Activated B cell treated with CpG ODN at 0.5 μM for 24 hours (primary cell): ENCODE measurements at regions of chr11 and their contacts with region 1.

Region 1: GRCh38 chr11:61071208-61071681 is 31.0 kb upstream of the CD5 start:
- DNase-seq: no peak
- ATAC-seq: peak; percentile 59
- H3K4me3 Mint-ChIP-seq: peak overlapping the region; percentile 70
- H3K27ac Mint-ChIP-seq: peak overlapping the region; percentile 95
- H3K4me1 Mint-ChIP-seq: peaks cover 81% of the 10 kb centered on the region
- H3K27me3 Mint-ChIP-seq: no peaks in the 10 kb centered on the region
- CTCF ChIP-seq: no peak

Region 2: DNA sequence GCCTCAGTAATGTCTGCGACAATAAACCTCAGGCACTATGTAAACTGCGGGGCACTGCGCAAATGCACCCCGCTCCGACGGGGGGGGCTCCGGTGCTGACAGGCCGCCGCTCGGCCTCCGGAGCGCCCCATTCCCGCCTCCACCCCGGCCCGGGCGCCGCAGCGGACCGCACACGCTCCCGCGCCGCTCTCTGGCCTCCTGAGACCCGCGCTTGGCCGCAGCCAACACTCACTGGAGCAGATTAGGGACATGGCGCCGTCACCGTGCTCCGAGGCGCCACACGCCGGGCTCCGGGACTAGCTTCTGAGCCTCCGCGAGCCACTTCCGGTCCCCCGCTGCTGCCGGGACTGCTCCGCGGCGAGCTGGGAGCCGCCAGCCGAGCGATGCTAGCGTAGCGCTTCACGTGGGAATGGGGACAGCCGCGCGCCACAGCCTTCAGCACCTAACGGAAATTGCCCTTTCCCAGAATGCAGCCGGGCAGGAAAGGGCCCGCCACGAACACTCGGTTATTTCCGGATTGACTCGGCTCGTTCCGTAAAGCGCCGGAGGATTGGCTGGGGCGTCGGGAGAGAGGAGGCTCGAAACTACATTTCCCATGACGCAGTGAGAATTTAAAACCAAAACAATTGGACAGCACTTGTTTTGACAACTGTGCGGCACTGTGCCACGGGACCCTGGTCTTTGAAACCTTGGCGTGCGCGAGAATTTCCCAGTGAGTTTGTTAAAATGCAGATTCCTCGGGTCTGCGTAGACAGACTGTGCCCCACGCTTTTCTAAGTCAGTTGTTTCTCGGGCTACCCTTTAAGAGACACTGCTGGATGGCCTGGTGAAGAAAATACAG is 164.9 kb before region 1 on chr11 and contains the start of gene PRPF19:
- CTCF ChIA-PET with region 1: no interaction called
- POLR2A ChIA-PET with region 1: interaction called, 5 read pairs
- intact Hi-C with region 1: loop called (anchors 2 kb)
- DNase-seq: peak; percentile 96
- ATAC-seq: peak; percentile 84
- H3K4me3 Mint-ChIP-seq: peak within 1 kb of the TSS; percentile 91
- H3K27ac Mint-ChIP-seq: peak within 1 kb of the TSS; percentile 97
- H3K4me1 Mint-ChIP-seq: peaks cover 74% of the 10 kb centered on the region
- H3K27me3 Mint-ChIP-seq: no peaks in the 10 kb centered on the region
- CTCF ChIP-seq: no peak
- total RNA-seq, gene PRPF19: 143 and 164 TPM in 2 replicates

Region 3: DNA sequence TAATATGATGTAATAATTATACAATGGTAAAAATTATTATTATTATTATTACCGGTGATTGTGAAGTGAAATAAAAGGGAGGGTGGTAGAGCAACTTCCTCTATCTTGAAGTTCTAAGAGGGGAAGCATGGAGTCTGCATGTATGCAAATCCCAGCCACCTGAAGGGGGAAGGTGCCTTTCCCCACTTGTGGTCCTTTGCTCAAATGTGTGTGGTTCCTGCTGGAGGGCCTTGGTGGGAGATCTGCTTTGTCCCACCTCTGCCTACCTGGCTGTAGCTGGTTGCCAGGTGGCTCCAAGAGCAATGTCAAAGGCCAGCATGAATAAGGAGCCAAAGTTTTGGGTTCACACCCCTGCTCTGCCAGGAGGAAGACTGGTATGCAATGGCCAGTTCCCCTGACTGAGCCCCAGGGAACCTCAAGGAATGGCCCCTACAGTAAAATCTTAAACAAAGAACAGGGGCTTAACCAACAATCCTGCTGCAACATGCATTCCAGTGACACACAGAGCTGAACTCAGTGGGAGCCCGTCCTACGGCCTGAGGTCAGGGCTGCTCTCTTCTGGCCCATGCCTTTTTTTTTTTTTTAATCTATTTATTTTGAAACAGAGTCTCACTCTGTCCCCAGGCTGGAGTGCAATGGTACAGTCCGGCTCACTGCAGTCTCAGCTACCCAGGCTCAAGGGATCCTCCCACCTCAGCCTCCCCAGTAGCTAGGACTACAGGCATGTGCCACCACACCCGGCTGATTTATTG is 138.5 kb before region 1 on chr11:
- CTCF ChIA-PET with region 1: no interaction called
- POLR2A ChIA-PET with region 1: interaction called, 4 read pairs
- intact Hi-C with region 1: loop called (anchors 2 kb)
- DNase-seq: no peak
- ATAC-seq: peak; percentile 57
- H3K4me3 Mint-ChIP-seq: peak overlapping the region; percentile 66
- H3K27ac Mint-ChIP-seq: peak overlapping the region; percentile 89
- H3K4me1 Mint-ChIP-seq: peaks cover 48% of the 10 kb centered on the region
- H3K27me3 Mint-ChIP-seq: no peaks in the 10 kb centered on the region
- CTCF ChIP-seq: no peak

Region 4: GRCh38 chr11:60951899-60952741 is 119.1 kb before region 1 on chr11 and contains the start of gene SLC15A3:
- CTCF ChIA-PET with region 1: no interaction called
- POLR2A ChIA-PET with region 1: interaction called, 6 read pairs
- intact Hi-C with region 1: loop called (anchors 2 kb)
- DNase-seq: peak; percentile 62
- ATAC-seq: peak; percentile 88
- H3K4me3 Mint-ChIP-seq: peak within 1 kb of the TSS; percentile 91
- H3K27ac Mint-ChIP-seq: peak within 1 kb of the TSS; percentile 91
- H3K4me1 Mint-ChIP-seq: peaks cover 57% of the 10 kb centered on the region
- H3K27me3 Mint-ChIP-seq: no peaks in the 10 kb centered on the region
- CTCF ChIP-seq: no peak
- total RNA-seq, gene SLC15A3: 76.4 and 77.8 TPM in 2 replicates

Region 5: DNA sequence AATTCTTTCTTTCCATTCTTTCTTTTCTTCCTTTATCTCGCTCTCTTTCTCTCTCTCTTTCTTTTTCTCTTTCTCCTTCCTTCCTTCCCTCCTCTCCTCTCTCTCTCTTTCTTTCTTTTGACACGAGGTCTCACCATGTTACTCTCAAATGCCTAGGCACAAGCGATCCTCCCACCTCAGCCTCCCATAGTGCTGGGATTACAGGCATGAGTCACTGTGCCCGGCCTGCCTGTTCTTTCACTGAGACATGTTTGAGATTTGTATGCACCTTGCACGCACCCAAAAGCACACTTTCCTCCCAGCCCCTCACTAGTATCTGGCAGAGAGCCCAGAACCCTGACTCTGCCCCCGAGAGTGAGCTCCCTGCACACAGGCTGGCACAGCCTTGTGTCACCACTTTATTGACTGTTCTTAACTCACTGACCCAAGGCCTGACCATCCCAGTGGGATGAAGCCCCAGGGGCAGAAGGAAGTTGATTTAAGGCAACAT is 42.9 kb before region 1 on chr11:
- CTCF ChIA-PET with region 1: no interaction called
- POLR2A ChIA-PET with region 1: interaction called, 8 read pairs
- intact Hi-C with region 1: loop called (anchors 2 kb)
- DNase-seq: no peak
- ATAC-seq: peak; percentile 91
- H3K4me3 Mint-ChIP-seq: peak overlapping the region; percentile 54
- H3K27ac Mint-ChIP-seq: peak overlapping the region; percentile 86
- H3K4me1 Mint-ChIP-seq: peaks cover 49% of the 10 kb centered on the region
- H3K27me3 Mint-ChIP-seq: no peaks in the 10 kb centered on the region
- CTCF ChIP-seq: no peak

Region 6: GRCh38 chr11:61091373-61092279 is 20.4 kb after region 1 on chr11:
- CTCF ChIA-PET with region 1: no interaction called
- POLR2A ChIA-PET with region 1: interaction called, 29 read pairs
- intact Hi-C with region 1: loop called (anchors 1 kb)
- DNase-seq: no peak
- ATAC-seq: peak; percentile 14
- H3K4me3 Mint-ChIP-seq: peak overlapping the region; percentile 77
- H3K27ac Mint-ChIP-seq: peak overlapping the region; percentile 86
- H3K4me1 Mint-ChIP-seq: peaks cover 78% of the 10 kb centered on the region
- H3K27me3 Mint-ChIP-seq: no peaks in the 10 kb centered on the region
- CTCF ChIP-seq: no peak

Region 7: GRCh38 chr11:61129639-61130523 is 58.6 kb after region 1 on chr11:
- CTCF ChIA-PET with region 1: interaction called, 12 read pairs
- POLR2A ChIA-PET with region 1: interaction called, 9 read pairs
- intact Hi-C with region 1: loop called (anchors 1 kb)
- DNase-seq: peak; percentile 82
- ATAC-seq: peak; percentile 100
- H3K4me3 Mint-ChIP-seq: no peak overlapping the region
- H3K27ac Mint-ChIP-seq: peak overlapping the region; percentile 6
- H3K4me1 Mint-ChIP-seq: peaks cover 8% of the 10 kb centered on the region
- H3K27me3 Mint-ChIP-seq: no peaks in the 10 kb centered on the region
- CTCF ChIP-seq: peak; percentile 96

Region 8: DNA sequence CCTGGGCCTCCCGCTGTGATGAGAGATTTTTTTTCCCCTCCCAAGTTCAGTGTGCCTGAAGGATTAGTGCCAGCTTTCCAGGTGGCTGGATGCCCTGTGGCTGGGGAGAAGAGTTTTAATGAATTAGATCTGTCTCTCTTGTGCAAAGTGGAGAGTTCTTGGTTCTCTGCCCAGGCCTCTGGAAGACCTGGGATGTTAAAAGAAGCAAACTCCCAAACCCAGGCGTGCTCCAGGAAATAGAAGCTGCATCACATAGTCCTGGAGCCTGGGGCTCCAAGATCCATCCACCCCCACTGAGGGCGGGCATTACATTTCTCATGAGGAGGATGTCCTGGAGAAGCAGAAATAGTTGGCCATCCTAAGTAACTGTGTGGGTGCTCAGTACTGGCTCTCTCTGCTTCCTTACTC is 389.2 kb after region 1 on chr11:
- CTCF ChIA-PET with region 1: no interaction called
- POLR2A ChIA-PET with region 1: no interaction called
- intact Hi-C with region 1: no loop called
- DNase-seq: no peak
- ATAC-seq: no peak
- H3K4me3 Mint-ChIP-seq: no peak overlapping the region
- H3K27ac Mint-ChIP-seq: no peak overlapping the region
- H3K4me1 Mint-ChIP-seq: no peaks in the 10 kb centered on the region
- H3K27me3 Mint-ChIP-seq: no peaks in the 10 kb centered on the region
- CTCF ChIP-seq: no peak